WTC11 (cell line): ENCODE measurements at regions of chr9 and their contacts with region 1.

Region 1: GRCh38 chr9:34403554-34404380 is 27.1 kb upstream of the MYORG start:
- DNase-seq: peak; percentile 82
- ATAC-seq: peak; percentile 43
- H3K4me3 Mint-ChIP-seq: no peak overlapping the region
- H3K27ac Mint-ChIP-seq: no peak overlapping the region
- H3K4me1 Mint-ChIP-seq: no peaks in the 10 kb centered on the region
- H3K27me3 Mint-ChIP-seq: no peaks in the 10 kb centered on the region
- CTCF ChIP-seq: peak; percentile 98

Region 2: GRCh38 chr9:34252670-34253459 is 150.9 kb before region 1 on chr9:
- CTCF ChIA-PET with region 1: interaction called, 12 read pairs
- POLR2A ChIA-PET with region 1: no interaction called
- DNase-seq: peak; percentile 81
- ATAC-seq: peak; percentile 77
- H3K4me3 Mint-ChIP-seq: no peak overlapping the region
- H3K27ac Mint-ChIP-seq: no peak overlapping the region
- H3K4me1 Mint-ChIP-seq: no peaks in the 10 kb centered on the region
- H3K27me3 Mint-ChIP-seq: no peaks in the 10 kb centered on the region
- CTCF ChIP-seq: peak; percentile 86

Region 3: GRCh38 chr9:34419716-34420504 is 16.1 kb after region 1 on chr9:
- CTCF ChIA-PET with region 1: interaction called, 61 read pairs
- POLR2A ChIA-PET with region 1: no interaction called
- DNase-seq: no peak
- ATAC-seq: no peak
- H3K4me3 Mint-ChIP-seq: no peak overlapping the region
- H3K27ac Mint-ChIP-seq: no peak overlapping the region
- H3K4me1 Mint-ChIP-seq: peaks cover 20% of the 10 kb centered on the region
- H3K27me3 Mint-ChIP-seq: peaks cover under 1% of the 10 kb centered on the region; the same call in 1 of the 2 replicates
- CTCF ChIP-seq: no peak

Region 4: GRCh38 chr9:34451545-34451944 is 47.8 kb after region 1 on chr9:
- CTCF ChIA-PET with region 1: interaction called, 34 read pairs
- POLR2A ChIA-PET with region 1: no interaction called
- DNase-seq: no peak
- ATAC-seq: peak; percentile 18
- H3K4me3 Mint-ChIP-seq: no peak overlapping the region
- H3K27ac Mint-ChIP-seq: no peak overlapping the region
- H3K4me1 Mint-ChIP-seq: peaks cover 16% of the 10 kb centered on the region
- H3K27me3 Mint-ChIP-seq: peaks cover 5% of the 10 kb centered on the region
- CTCF ChIP-seq: no peak

Region 5: DNA sequence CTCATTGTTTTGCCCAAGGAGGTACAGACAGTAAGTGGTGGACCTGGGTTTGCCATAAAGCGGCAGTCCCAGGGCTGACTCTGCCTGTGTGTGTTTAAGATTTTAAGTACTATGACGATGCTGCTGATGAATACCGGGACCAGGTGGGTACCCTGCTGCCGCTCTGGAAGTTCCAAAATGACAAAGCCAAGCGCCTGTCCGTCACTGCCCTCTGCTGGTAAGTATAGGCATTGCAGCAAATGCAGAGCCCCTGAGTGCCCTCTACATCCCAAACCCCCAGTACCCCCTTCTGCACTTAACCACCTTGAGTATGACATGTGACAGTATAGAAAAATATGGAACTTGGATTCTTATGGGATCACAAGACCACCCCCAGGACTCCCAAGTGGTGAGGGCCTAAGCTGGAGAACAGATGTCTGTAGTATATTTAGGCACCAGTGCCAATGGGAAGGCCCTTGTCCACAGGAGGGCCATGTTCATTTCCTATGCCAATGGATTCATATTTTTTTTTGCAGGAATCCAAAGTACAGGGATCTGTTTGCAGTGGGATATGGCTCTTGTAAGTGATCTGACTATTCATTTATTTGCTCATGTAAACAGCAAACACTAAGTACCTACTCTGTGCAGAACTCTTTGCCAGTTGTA is 97.0 kb after region 1 on chr9:
- CTCF ChIA-PET with region 1: interaction called, 31 read pairs
- POLR2A ChIA-PET with region 1: no interaction called
- DNase-seq: peak; percentile 83
- ATAC-seq: peak; percentile 80
- H3K4me3 Mint-ChIP-seq: no peak overlapping the region
- H3K27ac Mint-ChIP-seq: no peak overlapping the region
- H3K4me1 Mint-ChIP-seq: peaks cover 12% of the 10 kb centered on the region
- H3K27me3 Mint-ChIP-seq: peaks cover 4% of the 10 kb centered on the region; the same call in 1 of the 2 replicates
- CTCF ChIP-seq: peak; percentile 98

Region 6: GRCh38 chr9:34578241-34579103 is 174.7 kb after region 1 on chr9:
- CTCF ChIA-PET with region 1: interaction called, 18 read pairs
- POLR2A ChIA-PET with region 1: no interaction called
- DNase-seq: peak; percentile 56
- ATAC-seq: peak; percentile 25
- H3K4me3 Mint-ChIP-seq: peak overlapping the region; percentile 67
- H3K27ac Mint-ChIP-seq: no peak overlapping the region
- H3K4me1 Mint-ChIP-seq: peaks cover 48% of the 10 kb centered on the region
- H3K27me3 Mint-ChIP-seq: peaks cover 73% of the 10 kb centered on the region
- CTCF ChIP-seq: no peak